PC-3 (cell line): ENCODE measurements at regions of chr1 and their contacts with region 1.

Region 1: GRCh38 chr1:26874896-26875295 is 11.9 kb downstream of the SFN start:
- DNase-seq: no peak
- ATAC-seq: no peak
- H3K4me3 ChIP-seq: no peak overlapping the region
- H3K27ac ChIP-seq: peak overlapping the region; percentile 63
- H3K4me1 ChIP-seq: peaks cover 45% of the 10 kb centered on the region
- H3K27me3 ChIP-seq: no peaks in the 10 kb centered on the region
- CTCF ChIP-seq: no peak

Region 2: DNA sequence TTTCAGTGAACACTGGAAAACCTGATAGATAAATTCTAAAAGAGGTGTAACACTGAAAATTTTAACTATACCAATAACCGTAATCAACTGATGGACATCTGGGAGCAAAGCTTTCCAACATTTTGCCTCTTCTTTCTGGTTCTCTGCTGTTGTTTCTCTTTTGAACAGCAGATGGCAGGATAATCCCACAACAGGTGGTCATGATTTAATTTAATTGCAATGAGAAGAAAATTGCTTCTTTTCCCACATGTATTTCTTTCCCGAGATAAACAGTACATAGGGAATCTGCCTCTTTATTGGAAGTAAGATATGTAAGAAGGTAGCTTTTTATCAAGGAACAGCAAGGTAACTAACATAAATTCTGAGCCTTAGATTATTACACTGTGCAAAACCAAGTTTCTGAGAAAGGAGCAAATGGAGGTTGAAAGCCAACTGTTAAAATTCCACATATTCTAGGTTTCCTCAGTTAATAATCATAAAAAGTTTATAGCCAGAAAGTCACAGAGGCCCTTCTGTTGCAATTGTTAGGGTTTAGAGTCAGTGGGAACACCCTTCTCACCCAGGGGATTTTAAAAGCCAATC is 272.4 kb before region 1 on chr1:
- CTCF ChIA-PET with region 1: no interaction called
- POLR2A ChIA-PET with region 1: no interaction called
- intact Hi-C with region 1: loop called (anchors 1 kb)
- DNase-seq: peak; percentile 87
- ATAC-seq: peak; percentile 49
- H3K4me3 ChIP-seq: no peak overlapping the region
- H3K27ac ChIP-seq: no peak overlapping the region
- H3K4me1 ChIP-seq: peaks cover 7% of the 10 kb centered on the region; the same call in 1 of the 2 replicates
- H3K27me3 ChIP-seq: no peaks in the 10 kb centered on the region
- CTCF ChIP-seq: peak; percentile 93

Region 3: DNA sequence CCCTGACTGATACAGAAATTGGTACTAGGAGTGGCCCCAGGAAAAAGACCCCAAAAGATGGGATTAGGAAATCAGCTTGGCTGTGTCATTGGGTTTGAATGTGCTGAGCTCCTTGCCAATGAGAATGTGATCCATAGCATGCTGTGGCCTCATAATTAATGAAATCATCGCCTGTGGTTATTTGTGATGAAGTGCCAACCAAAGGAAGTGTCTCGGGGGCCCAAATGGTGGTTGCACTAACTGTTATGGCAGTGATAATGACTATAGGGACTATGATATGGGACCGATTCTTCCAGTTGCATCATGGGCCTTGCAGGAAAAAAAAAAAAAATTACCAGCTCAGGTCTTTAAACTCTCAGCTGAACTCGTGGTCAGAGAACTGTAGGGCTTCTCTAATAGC is 63.8 kb before region 1 on chr1:
- CTCF ChIA-PET with region 1: no interaction called
- POLR2A ChIA-PET with region 1: no interaction called
- intact Hi-C with region 1: loop called (anchors 5 kb)
- DNase-seq: no peak
- ATAC-seq: no peak
- H3K4me3 ChIP-seq: no peak overlapping the region
- H3K27ac ChIP-seq: no peak overlapping the region
- H3K4me1 ChIP-seq: no peaks in the 10 kb centered on the region
- H3K27me3 ChIP-seq: no peaks in the 10 kb centered on the region
- CTCF ChIP-seq: no peak

Region 4: GRCh38 chr1:26853156-26853555 is 21.7 kb before region 1 on chr1:
- CTCF ChIA-PET with region 1: interaction called, 3 read pairs
- POLR2A ChIA-PET with region 1: no interaction called
- intact Hi-C with region 1: loop called (anchors 1 kb)
- DNase-seq: peak; percentile 99
- ATAC-seq: peak; percentile 87
- H3K4me3 ChIP-seq: no peak overlapping the region
- H3K27ac ChIP-seq: peak overlapping the region; percentile 89
- H3K4me1 ChIP-seq: peaks cover 57% of the 10 kb centered on the region
- H3K27me3 ChIP-seq: no peaks in the 10 kb centered on the region
- CTCF ChIP-seq: peak; percentile 91

Region 5: DNA sequence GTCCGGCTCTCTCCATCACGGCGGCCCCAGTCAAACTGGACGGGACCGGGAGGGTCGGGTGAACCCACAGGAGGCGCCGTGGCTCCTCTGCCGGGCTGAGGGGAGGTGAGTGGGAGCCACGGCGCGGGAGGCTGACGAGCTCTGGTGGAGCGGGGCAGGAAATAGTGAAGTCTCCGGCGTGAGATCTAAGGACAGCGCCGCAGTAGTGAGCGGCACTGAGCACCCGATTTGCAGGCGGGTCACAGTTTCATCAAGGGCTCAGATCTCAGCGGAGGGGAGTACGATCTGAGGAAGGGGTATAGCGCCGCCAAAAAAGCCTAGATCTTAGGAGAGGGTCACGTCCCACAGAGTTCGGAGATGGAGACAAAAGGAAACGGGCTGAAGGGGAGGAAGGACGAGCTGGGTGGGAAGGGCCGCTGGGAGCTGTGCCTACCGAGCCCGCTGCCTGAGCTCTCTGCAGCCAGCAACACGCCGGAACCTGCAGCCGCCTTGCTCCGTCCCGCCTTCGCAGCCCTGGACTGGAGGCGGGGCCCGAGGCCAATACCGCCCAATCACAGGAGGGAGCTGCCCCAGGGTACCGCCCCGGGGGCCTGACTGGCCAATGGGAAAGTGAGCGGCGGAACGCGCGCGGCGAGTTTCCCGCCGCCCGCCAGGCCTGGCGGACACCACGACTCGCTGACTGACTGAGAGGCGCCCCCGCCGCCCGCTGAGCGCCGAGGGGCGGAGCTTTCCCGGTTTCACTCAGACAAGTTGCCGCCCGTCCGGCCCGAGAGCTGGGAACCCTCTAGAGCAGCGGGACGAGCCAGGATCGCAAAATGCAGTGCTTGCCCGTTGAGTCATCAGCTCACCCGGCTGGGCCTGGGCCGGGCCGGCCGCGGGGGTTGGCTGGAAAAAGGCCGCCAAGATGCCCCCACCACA is 10.0 kb before region 1 on chr1:
- CTCF ChIA-PET with region 1: no interaction called
- POLR2A ChIA-PET with region 1: interaction called, 7 read pairs
- intact Hi-C with region 1: loop called (anchors 1 kb)
- DNase-seq: peak; percentile 99
- ATAC-seq: peak; percentile 64
- H3K4me3 ChIP-seq: peak overlapping the region; percentile 90
- H3K27ac ChIP-seq: peak overlapping the region; percentile 95
- H3K4me1 ChIP-seq: peaks cover 43% of the 10 kb centered on the region
- H3K27me3 ChIP-seq: no peaks in the 10 kb centered on the region
- CTCF ChIP-seq: 0 out of 2 replicates have a peak, but pooled peaks have one; percentile 20